ENCODE measurements at regions of chr17 and their contacts with region 1.

Region 1: DNA sequence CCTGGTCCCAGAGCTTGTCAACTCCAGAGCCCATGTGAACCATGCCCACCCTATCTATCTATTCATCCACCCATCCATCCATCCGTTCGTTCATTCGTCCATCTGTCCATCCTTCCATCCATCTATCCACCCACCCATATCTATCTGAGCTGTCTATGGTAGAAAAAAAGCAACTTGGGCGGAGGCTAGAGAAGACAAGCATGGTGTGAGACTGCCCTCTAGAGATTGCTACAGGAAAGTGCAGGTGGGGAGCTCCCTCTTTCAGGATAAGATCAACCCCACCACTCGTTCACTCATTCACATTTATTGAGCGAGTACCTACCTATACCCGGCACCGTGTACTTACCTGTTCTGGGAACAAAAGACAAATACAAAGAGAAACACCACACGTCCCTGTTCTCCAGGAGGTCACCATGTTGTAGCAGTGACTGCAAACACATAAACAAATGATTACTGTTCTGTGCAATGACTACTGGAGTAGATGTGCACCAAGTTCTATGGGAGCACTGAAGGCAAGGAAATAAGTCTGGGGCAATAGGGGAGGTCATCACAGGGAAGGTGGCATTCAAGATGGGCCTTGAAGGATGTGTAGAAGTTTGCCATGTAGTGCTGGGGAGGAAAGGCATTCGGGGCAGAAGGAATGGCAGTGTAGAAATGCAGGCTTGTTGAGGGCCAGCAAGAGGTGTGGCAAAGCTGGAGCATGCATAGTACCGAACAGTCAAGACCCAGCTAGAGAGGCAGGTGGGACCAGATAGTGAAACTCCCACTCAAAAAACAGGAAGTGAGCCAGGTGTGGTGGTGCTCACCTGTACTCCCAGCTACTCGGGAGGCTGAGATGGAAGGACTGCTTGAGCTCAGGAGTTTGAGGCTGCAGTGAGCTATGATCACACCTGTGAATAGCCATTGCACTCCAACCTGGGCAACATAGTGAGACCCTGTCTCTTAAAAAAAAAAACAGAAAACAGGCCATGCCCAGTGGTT is 13.4 kb upstream of the ATP5MC1 start:
- DNase-seq: peak; percentile 73
- H3K4me3 Mint-ChIP-seq: no peak overlapping the region
- H3K27ac Mint-ChIP-seq: no peak overlapping the region
- H3K4me1 Mint-ChIP-seq: peaks cover 11% of the 10 kb centered on the region
- H3K27me3 Mint-ChIP-seq: peaks cover 4% of the 10 kb centered on the region

Region 2: DNA sequence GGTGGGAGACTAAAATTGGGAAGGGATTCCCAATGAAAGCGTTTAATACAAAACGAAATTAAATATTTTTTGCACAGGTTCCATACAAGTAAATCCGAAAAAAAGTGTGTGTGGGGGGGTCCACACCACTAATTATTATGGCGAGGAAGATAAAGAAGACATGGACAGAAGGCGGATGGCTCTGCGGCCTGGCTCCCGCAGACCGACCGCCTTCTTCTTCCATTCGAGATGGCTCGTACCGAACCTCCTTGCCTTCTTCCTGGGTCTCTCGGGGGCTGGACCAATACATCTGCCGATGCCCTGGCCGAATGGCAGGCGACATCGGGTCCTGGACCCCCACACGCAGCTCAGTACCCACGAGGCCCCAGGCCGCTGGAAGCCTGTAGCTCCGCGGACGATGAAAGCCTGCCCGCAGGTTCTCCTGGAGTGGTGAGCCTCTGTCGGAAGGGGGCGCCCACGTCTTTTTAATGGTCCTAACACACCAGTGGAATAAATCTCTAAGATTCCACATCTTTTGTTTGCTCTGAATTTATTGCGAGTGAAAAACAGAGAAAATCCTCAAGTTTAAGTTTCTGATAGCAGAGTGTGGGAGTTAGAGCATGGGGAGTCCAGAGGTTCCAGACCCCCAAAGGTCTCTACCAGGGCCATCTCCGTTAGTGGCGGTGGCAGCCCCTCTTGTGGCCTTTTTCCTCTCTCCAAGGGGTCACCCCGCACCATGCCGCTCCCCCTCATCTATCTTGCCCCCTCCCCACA is 154.8 kb before region 1 on chr17:
- CTCF ChIA-PET with region 1: interaction called, 13 read pairs
- POLR2A ChIA-PET with region 1: no interaction called
- DNase-seq: peak; percentile 84
- H3K4me3 Mint-ChIP-seq: peak overlapping the region; percentile 26
- H3K27ac Mint-ChIP-seq: peak overlapping the region; percentile 47
- H3K4me1 Mint-ChIP-seq: peaks cover 28% of the 10 kb centered on the region
- H3K27me3 Mint-ChIP-seq: peaks cover 96% of the 10 kb centered on the region

Region 3: DNA sequence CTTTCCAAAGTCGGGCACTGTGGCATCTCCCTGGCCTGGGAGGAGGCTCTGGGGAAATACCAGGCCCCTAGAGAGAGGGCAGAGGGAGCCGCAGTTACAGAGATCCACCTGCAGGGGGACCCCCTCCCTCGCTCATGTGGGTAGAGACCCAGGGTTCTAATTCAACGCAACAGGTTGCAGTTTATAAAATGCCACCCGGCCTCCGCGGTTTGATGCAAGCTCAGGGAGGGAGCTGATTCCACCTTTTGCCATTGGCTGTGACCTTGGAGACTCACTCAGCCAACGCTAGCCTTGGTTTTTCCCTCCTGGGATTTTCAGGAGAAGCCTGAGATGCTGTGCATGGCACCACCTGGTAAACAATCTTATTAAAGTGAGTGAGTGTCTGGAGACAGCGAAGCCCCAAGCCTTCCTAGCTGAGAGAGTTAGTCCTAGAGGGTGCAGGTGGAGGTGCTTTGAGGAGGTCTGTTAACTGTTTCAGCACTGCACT is 74.2 kb before region 1 on chr17:
- CTCF ChIA-PET with region 1: interaction called, 96 read pairs
- POLR2A ChIA-PET with region 1: no interaction called
- DNase-seq: peak; percentile 74
- H3K4me3 Mint-ChIP-seq: no peak overlapping the region
- H3K27ac Mint-ChIP-seq: no peak overlapping the region
- H3K4me1 Mint-ChIP-seq: no peaks in the 10 kb centered on the region
- H3K27me3 Mint-ChIP-seq: peaks cover 24% of the 10 kb centered on the region

Region 4: GRCh38 chr17:48836004-48836403 is 43.2 kb before region 1 on chr17:
- CTCF ChIA-PET with region 1: interaction called, 12 read pairs
- POLR2A ChIA-PET with region 1: no interaction called
- DNase-seq: peak; percentile 22
- H3K4me3 Mint-ChIP-seq: no peak overlapping the region
- H3K27ac Mint-ChIP-seq: peak overlapping the region; percentile 76
- H3K4me1 Mint-ChIP-seq: peaks cover 92% of the 10 kb centered on the region
- H3K27me3 Mint-ChIP-seq: no peaks in the 10 kb centered on the region

Region 5: DNA sequence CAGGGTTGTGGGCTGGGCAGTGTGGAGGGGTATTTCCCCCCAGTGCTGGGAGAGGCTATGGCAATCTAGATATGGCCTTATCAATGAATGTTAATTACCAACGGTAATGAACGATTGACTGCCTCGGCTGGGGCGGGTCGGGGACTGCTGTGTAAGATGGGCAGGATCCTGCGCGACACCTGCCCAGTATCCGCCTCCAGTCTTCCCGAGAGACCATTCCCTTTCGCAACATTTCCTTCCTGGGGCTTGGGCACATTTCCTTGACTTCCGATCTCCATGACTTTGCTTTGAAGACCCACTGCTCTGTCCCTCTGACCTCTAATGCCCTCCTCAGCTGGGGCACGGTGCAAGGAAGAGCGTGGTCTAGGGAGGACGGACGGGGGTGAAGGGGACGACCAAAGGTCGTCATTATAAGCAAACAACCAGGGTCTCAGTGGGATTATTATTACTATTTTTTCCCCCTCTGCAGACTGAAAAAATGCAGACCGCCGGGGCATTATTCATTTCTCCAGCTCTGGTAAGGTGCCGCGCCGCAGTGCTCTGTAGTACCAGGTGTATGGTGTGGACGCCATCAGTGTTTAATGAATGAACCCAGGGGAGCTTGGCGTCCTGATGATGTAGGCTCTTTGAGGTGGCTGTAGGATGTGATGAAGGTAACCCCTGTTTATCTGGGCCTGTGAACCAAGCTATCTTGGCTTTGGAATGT is 13.9 kb after region 1 on chr17:
- CTCF ChIA-PET with region 1: interaction called, 12 read pairs
- POLR2A ChIA-PET with region 1: interaction called, 4 read pairs
- DNase-seq: no peak
- H3K4me3 Mint-ChIP-seq: peak overlapping the region; percentile 94
- H3K27ac Mint-ChIP-seq: peak overlapping the region; percentile 92
- H3K4me1 Mint-ChIP-seq: peaks cover 34% of the 10 kb centered on the region
- H3K27me3 Mint-ChIP-seq: no peaks in the 10 kb centered on the region

Measured in activated CD4-positive, alpha-beta T cell treated with anti-CD3 and anti-CD28 coated beads, Interleukin-2, amount 10 ng/mL, durations not matched to agents 7 days and 5 days (primary cell).